Endothelial cell of umbilical vein (primary cell): ENCODE measurements at regions of chr1 and their contacts with region 1.

Region 1: GRCh38 chr1:40404670-40405462 is 31.3 kb downstream of the SMAP2 start:
- DNase-seq: peak; percentile 75
- H3K4me3 ChIP-seq: no peak overlapping the region
- H3K27ac ChIP-seq: no peak overlapping the region
- H3K4me1 ChIP-seq: no peaks in the 10 kb centered on the region
- H3K27me3 ChIP-seq: no peaks in the 10 kb centered on the region
- CTCF ChIP-seq: peak; percentile 56 to 62
- POLR2A ChIP-seq: no peak

Region 2: GRCh38 chr1:40153073-40153770 is 251.6 kb before region 1 on chr1:
- CTCF ChIA-PET with region 1: interaction called, 128 read pairs
- POLR2A ChIA-PET with region 1: no interaction called
- dilution Hi-C with region 1: no loop called
- intact Hi-C with region 1: no loop called
- DNase-seq: peak; percentile 76
- H3K4me3 ChIP-seq: no peak overlapping the region
- H3K27ac ChIP-seq: no peak overlapping the region
- H3K4me1 ChIP-seq: no peaks in the 10 kb centered on the region
- H3K27me3 ChIP-seq: peaks cover 16 to 35% of the 10 kb centered on the region in 2 experiments
- CTCF ChIP-seq: peak; percentile 57 to 70
- POLR2A ChIP-seq: no peak

Region 3: DNA sequence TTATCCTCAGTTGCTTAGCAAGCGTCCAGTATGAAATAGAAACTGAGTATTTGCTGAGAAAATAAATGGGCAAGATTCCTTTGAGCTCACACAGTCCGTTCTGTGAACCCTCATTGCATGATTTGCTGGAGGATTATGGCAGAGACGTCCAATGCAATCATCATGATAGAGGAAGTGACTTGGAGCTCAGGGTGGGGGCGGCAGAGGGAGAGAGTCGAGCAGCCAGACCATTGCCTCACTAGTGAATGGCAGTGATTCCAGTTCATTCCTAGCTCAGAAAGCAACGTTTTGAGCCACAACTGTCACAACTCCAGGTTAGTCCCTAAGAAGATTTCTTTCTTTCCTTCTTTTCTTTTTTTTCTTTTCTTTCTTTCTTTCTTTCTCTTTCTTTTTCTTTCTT is 60.3 kb before region 1 on chr1:
- CTCF ChIA-PET with region 1: interaction called, 103 read pairs
- POLR2A ChIA-PET with region 1: no interaction called
- dilution Hi-C with region 1: no loop called
- intact Hi-C with region 1: no loop called
- DNase-seq: no peak
- H3K4me3 ChIP-seq: no peak overlapping the region
- H3K27ac ChIP-seq: no peak overlapping the region
- H3K4me1 ChIP-seq: no peaks in the 10 kb centered on the region
- H3K27me3 ChIP-seq: peaks cover 0 to 3% of the 10 kb centered on the region in 2 experiments
- CTCF ChIP-seq: no peak
- POLR2A ChIP-seq: no peak

Region 4: DNA sequence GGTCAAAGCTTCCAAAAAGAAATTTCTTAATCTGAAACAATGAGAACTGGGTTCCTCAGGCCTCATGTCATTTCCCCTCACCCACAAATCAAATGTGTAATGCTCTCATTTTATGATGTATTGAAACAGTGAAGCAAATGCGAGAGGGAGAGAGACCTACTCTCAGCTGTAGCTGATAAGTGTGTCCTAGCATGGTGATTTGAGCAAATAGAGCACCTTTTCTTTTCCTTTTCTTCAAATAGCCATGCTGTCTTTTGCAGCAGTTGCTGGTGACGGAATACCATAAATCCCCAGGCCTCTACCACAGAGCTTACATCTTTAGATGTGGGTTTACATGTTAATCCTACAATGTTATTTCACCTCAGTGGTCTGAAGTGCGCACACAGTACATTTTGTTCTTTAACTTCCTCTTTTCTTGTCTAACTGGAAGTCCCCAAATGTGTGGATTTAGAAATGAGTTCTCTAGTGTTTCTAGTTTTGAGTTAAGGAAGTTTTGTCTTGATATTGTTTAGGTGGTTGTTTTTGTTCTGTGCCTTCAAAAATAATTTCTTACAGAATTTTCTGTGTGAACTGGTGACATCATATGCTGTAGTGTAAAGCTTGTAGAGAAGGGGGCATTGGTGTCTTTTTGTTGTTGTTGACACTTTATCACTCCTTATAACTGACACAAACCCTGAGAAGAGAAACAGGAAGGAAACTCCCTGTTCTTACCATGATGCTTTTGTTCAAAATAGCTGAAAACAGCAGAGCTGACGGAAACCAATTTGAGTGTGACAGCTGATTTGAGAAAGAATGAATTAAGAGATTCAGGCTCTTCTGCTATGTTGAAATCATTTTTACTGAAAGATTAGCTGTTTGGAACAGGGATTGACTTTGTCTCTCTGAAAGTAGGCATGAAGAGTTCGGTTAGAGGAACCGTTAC is 19.2 kb before region 1 on chr1:
- CTCF ChIA-PET with region 1: interaction called, 37 read pairs
- POLR2A ChIA-PET with region 1: no interaction called
- dilution Hi-C with region 1: no loop called
- intact Hi-C with region 1: no loop called
- DNase-seq: peak; percentile 11
- H3K4me3 ChIP-seq: no peak overlapping the region
- H3K27ac ChIP-seq: no peak overlapping the region
- H3K4me1 ChIP-seq: peaks cover 8% of the 10 kb centered on the region
- H3K27me3 ChIP-seq: no peaks in the 10 kb centered on the region
- CTCF ChIP-seq: no peak
- POLR2A ChIP-seq: no peak

Region 5: DNA sequence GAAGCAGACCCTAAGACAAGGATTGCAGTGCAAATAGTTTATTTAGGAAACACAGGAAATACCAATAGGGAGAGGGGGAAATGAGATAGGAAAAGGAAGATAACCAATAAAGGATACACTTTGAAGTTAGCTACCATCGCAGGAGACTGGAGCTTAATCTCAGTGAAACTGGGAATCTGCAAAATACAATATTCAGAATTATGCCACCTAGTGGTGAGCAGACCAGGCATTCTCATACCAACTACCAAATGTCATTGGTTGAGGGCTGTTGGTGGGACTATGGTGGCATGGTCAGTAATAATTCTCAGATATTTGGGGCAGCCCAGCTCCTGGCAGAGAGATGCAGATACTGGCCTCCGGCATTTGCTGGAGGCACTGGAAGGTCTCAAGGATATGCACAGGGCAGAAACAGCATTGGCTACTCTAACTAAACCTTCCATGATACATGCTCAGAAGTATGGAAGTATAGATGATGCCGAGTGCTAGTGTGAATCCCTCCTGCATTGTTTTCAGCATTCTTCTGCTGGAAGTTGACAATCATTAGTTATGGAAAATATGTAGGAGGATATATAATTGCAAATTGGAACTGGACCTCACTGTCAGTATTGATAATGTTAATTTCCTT is 33.6 kb after region 1 on chr1:
- CTCF ChIA-PET with region 1: interaction called, 20 read pairs
- POLR2A ChIA-PET with region 1: no interaction called
- dilution Hi-C with region 1: no loop called
- intact Hi-C with region 1: no loop called
- DNase-seq: peak; percentile 51
- H3K4me3 ChIP-seq: no peak overlapping the region
- H3K27ac ChIP-seq: no peak overlapping the region
- H3K4me1 ChIP-seq: no peaks in the 10 kb centered on the region
- H3K27me3 ChIP-seq: no peaks in the 10 kb centered on the region
- CTCF ChIP-seq: peak; percentile 67 to 82
- POLR2A ChIP-seq: no peak

Region 6: GRCh38 chr1:40495315-40495903 is 90.5 kb after region 1 on chr1:
- CTCF ChIA-PET with region 1: no interaction called
- POLR2A ChIA-PET with region 1: no interaction called
- dilution Hi-C with region 1: no loop called
- intact Hi-C with region 1: no loop called
- DNase-seq: no peak
- H3K4me3 ChIP-seq: no peak overlapping the region
- H3K27ac ChIP-seq: no peak overlapping the region
- H3K4me1 ChIP-seq: no peaks in the 10 kb centered on the region
- H3K27me3 ChIP-seq: no peaks in the 10 kb centered on the region
- CTCF ChIP-seq: no peak
- POLR2A ChIP-seq: no peak